ENCODE measurements at regions of chr17 and their contacts with region 1.

Region 1: DNA sequence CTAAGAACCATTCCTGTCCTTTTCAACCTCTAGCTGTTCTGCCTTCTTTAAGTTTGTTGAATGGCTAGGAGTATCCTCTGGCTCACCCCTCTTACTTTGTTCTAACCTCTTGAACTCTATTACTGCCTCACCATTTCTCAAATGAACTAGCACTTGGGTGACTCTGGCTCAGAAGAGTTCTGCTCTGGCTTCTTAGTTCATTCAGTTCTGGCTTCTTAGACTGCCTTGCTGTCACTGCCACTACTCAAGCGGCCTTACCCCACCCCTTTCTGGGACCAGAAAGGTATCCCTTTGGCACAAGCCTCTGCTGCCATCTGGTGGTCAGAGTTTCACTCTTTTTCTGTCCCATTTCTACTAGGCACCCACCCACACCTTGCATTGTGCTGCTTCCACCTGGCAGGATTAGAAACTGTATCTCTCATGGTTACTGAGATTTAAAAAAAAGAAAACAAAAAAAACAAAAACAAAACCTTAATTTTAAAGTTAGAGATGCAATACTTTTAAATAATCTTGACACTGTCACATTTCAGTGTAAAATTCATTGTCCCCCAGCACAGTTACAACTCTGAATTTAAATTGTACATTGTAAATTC is 6.8 kb upstream of the ABCA10 start:
- DNase-seq: peak; percentile 92
- H3K4me3 Mint-ChIP-seq: no peak overlapping the region
- H3K27ac Mint-ChIP-seq: no peak overlapping the region
- H3K4me1 Mint-ChIP-seq: peaks cover 2% of the 10 kb centered on the region
- H3K27me3 Mint-ChIP-seq: peaks cover 14% of the 10 kb centered on the region

Region 2: DNA sequence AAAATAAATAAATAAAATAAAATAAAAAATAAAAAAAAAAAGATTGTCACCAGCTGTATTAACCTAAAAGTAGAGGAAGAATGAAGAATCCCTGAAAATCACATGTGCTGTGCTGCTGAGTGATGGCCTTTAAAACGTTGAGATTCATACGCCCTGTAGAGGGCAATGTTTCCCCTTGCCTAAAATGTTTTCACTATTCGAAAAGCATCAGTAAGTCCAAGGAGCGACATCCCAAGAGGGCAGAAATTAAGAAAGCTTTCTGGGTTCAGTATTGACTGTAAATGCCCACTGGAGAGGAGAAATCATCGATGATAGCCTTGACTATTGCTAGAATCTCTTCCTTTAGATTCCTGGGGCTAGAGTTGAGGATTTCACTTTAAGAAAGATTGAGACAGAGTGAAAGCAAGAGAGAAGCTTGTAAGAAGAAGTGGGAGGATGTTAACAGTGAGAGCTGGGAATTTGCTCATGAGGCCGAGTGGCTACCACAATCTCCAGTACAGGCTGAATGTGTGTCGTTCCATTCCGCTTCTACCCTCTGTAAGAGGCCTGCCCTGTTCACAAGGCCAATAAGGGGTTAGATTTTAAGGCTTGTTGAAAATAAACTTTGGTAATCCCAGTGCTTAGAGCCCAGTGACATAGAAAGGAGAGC is 463.4 kb before region 1 on chr17:
- intact Hi-C with region 1: loop called (anchors 1 kb)
- DNase-seq: peak; percentile 71
- H3K4me3 Mint-ChIP-seq: peak overlapping the region; percentile 69
- H3K27ac Mint-ChIP-seq: no peak overlapping the region
- H3K4me1 Mint-ChIP-seq: peaks cover 6% of the 10 kb centered on the region
- H3K27me3 Mint-ChIP-seq: peaks cover 3% of the 10 kb centered on the region

Region 3: DNA sequence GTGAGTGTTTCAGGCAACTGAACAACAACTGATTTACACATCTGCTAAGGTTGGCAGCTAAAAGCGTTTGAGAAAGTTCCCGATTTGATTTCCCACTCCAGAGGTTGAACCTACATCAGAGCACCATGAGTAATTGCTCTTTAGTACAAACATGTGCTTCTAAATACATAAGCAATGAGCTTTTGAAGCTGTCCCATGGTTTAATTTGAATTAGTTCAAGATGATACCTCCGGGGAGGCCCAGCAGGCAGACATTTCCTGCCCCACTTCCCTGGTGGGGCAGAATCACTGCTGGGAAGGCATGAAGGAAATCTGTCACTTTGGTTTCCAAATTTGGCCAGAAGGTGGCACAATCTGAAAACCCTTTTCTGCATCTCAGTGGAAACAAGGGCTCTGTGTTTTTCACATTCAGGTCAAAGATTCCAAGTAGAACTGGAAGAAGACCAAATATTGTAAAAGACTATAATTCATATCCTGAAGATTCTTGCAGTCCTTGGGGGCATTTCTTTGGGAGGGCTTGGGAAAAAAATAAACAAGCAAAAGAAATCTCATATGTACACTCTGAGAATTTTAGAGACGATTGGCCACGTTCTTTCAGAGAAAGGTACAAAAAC is 458.1 kb before region 1 on chr17:
- intact Hi-C with region 1: loop called (anchors 1 kb)
- DNase-seq: peak; percentile 81
- H3K4me3 Mint-ChIP-seq: no peak overlapping the region
- H3K27ac Mint-ChIP-seq: no peak overlapping the region
- H3K4me1 Mint-ChIP-seq: peaks cover 2% of the 10 kb centered on the region
- H3K27me3 Mint-ChIP-seq: peaks cover 14% of the 10 kb centered on the region

Region 4: DNA sequence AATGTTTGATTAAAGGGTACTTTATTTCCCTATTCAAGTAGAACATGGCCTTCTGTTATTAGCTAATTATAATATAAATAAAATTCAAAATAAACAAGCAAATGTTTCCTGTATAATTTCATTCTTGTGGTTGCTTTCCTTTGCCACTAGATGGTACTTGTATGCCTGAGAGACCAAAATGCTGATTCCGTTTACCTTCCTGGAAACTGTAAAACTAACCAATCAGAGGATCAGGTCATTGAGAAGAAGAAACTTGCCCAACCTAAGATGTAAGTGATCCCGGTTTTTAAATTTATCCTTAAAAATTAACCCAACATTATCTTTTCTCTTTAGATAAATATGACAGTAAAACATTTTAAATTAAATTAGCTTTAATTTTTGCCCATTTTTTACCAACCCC is 99.6 kb after region 1 on chr17:
- intact Hi-C with region 1: no loop called
- DNase-seq: no peak
- H3K4me3 Mint-ChIP-seq: no peak overlapping the region
- H3K27ac Mint-ChIP-seq: no peak overlapping the region
- H3K4me1 Mint-ChIP-seq: peaks cover 3% of the 10 kb centered on the region
- H3K27me3 Mint-ChIP-seq: peaks cover 27% of the 10 kb centered on the region

Measured in activated CD4-positive, alpha-beta T cell treated with anti-CD3 and anti-CD28 coated beads, Interleukin-2, amount 10 ng/mL, durations not matched to agents 24 days and 14 days (primary cell).